Right ventricle myocardium superior (tissue), 1 donor: ENCODE measurements at regions of chr5 and their contacts with region 1.

Region 1: DNA sequence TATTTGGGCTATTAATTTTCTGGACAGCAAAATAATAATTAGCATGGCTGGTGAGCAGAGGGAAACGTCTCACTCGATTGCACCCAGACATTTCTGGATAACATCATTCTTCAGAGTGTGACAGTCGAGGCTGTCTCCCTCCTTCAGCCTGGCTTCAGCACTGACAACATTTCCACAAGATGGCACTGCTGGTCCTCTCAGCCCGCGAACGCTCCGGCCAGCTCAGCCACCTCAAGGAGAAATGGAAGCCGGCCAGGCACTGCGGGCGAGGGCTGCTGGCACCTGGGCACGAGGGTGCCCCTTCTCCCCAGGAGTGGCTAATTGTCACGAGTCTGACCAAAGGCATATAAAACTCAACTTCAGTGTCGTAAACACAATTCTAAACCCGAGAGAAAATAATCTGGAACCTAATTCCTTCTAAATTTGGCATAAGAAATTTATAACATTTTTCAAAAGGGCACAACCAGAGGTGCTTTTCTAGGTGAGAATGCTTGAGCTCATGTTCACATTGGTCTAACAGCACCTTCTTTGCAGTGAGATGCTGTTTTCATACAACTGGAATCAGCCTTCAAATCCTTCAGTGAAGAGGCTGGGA is 65.9 kb downstream of the DAP start:
- DNase-seq: peak; percentile 83
- ATAC-seq: peak; percentile 97

Region 2: GRCh38 chr5:10913846-10914245 is 218.7 kb after region 1 on chr5:
- intact Hi-C with region 1: no loop called
- DNase-seq: no peak
- ATAC-seq: peak; percentile 60

Region 3: GRCh38 chr5:11177999-11178711 is 483.0 kb after region 1 on chr5:
- intact Hi-C with region 1: loop called (anchors 10 kb)
- DNase-seq: no peak
- ATAC-seq: no peak